ENCODE measurements at regions of chr5 and their contacts with region 1.

Region 1: GRCh38 chr5:14739538-14739937 is 75.0 kb downstream of the OTULIN start:
- DNase-seq: peak; percentile 47
- ATAC-seq: peak in 1 of 2 donors; percentile 66

Region 2: GRCh38 chr5:14640765-14641164 is 98.8 kb before region 1 on chr5:
- intact Hi-C with region 1: no loop called
- DNase-seq: no peak
- ATAC-seq: no peak

Region 3: DNA sequence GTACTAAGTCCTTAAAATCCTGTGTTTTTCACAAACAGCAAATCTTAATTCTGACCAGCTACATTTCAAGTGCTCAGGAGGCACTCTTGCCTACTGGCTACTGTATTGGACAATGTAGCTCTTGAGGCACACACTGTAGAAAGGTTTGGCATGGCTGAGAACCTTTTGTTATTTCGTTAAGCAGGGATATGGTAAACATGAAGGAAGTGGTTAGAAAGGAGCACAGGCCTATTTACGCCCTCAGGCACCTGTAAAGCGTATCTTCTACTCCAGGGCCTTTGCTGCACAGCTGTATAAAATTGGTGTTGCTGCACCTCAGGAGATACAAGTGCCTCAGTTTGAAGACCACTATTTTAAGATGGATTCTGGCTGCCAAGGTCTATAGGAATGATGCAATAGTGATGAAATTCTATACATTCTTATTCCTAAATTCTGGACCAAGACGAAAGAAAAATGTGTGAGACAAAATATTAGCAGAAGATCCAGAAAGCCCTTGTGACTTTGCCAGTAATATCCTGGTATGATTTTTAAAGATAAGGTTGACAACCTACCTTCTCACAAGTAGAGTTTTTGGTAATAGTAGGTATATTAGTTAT is 84.3 kb before region 1 on chr5:
- intact Hi-C with region 1: no loop called
- DNase-seq: no peak
- ATAC-seq: no peak

Region 4: GRCh38 chr5:14809369-14810155 is 70.0 kb after region 1 on chr5:
- intact Hi-C with region 1: loop called in 1 of 2 experiments (anchors 10 kb)
- DNase-seq: peak; percentile 72
- ATAC-seq: peak; percentile 75 to 91

Region 5: GRCh38 chr5:14871210-14872069 is 131.9 kb after region 1 on chr5 and contains the start of gene ANKH:
- intact Hi-C with region 1: loop called (anchors 5 to 10 kb)
- DNase-seq: peak; percentile 88
- ATAC-seq: peak; percentile 88 to 94
- total RNA-seq, gene ANKH: 113 to 138 TPM

Measured in left cardiac atrium (tissue), 4 donors.